Calu3 (cell line): ENCODE measurements at regions of chrX and their contacts with region 1.

Region 1: GRCh38 chrX:116009861-116010710 is 160.5 kb upstream of the AGTR2 start:
- DNase-seq: peak; percentile 3
- H3K4me3 Mint-ChIP-seq: peak overlapping the region; percentile 25
- H3K27ac Mint-ChIP-seq: peak overlapping the region; percentile 19
- H3K4me1 Mint-ChIP-seq: peaks cover 20% of the 10 kb centered on the region
- H3K27me3 Mint-ChIP-seq: peaks cover 9% of the 10 kb centered on the region
- CTCF ChIP-seq: no peak

Region 2: DNA sequence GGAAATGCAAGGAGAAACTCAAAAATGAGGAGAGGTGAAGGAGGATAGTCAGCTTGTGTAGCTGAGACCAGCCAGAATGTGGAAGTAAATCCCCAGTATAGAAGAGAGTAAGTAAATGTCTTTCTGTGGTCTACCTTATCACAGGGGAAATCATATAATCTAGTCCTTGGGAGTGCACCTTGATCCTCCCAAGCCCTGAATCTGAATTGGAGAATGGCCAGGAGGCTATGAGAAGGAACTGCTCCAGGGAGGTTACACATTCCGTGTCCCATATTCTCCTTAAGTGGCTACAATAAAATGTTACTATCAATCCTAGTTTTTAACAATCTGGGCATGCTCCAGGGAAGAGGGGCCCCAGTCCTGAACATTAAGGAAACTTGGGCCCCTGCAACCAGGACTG is 171.2 kb after region 1 on chrX:
- CTCF ChIA-PET with region 1: no interaction called
- intact Hi-C with region 1: loop called (anchors 10 kb)
- DNase-seq: no peak
- H3K4me3 Mint-ChIP-seq: no peak overlapping the region
- H3K27ac Mint-ChIP-seq: no peak overlapping the region
- H3K4me1 Mint-ChIP-seq: no peaks in the 10 kb centered on the region
- H3K27me3 Mint-ChIP-seq: no peaks in the 10 kb centered on the region
- CTCF ChIP-seq: no peak